ENCODE measurements at regions of chr3 and their contacts with region 1.

Region 1: GRCh38 chr3:53072653-53073552 is 27.0 kb upstream of the SFMBT1 start:
- DNase-seq: peak; percentile 74 to 91 (median 88)
- ATAC-seq: peak; percentile 97
- H3K4me3 ChIP-seq: peak overlapping the region; percentile 82
- H3K4me3 Mint-ChIP-seq: peak overlapping the region; percentile 90 to 97 (median 92)
- H3K27ac ChIP-seq: peak overlapping the region; percentile 79
- H3K27ac Mint-ChIP-seq: peak overlapping the region; percentile 84 to 97 (median 95)
- H3K4me1 ChIP-seq: peaks cover 9 to 15% of the 10 kb centered on the region in 2 donors
- H3K4me1 Mint-ChIP-seq: peaks cover 12 to 24% (median 20%) of the 10 kb centered on the region in 7 donors
- H3K27me3 ChIP-seq: no peaks in the 10 kb centered on the region
- H3K27me3 Mint-ChIP-seq: peaks cover 0 to 6% (median 0%) of the 10 kb centered on the region in 5 donors

Region 2: DNA sequence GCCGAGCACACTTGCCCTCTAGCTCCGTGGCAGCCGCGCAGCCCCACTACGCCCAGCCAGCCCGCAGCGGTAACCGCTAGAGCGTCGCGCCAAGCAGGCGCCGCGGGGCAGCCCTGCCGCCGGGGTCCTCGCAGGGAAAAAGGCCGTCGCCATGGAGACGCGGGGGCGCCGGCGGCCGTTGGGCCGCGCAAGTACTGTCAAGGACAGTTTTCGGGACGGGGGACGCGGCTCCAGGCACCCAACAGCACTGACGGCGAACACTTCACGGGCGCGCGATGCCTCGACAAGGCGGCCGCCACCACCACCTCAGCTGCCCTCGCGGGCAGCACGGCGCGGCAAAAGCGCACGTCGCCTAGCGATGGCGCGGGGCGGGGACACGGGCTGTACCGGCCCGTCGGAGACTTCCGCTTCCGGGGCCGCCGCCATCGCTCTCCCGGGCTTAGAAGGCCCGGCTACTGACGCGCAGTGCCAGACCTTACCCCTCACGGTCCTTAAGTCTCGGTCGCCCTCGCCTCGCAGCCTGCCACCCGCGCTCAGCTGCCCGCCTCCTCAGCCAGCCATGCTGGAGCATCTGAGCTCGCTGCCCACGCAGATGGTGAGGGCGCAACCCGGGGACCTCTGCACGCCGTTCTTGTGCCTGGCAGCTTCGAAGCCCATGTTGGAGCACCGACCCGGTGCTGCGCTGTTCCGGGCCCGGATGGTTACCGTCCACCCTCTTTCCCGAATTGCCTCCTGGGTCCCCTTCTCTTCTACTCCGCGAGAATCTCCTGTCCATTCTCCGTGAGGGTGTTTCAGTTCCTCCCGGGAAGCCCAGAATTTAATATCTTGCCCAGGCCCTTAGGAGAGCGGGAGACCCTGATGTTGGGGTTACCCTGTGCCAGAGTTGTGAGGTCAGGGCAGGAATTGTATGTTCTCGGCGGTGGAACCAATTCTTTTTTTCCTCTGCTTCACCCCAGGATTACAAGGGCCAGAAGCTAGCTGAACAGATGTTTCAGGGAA is 366.9 kb before region 1 on chr3 and contains the starts of genes GLT8D1 and SPCS1:
- CTCF ChIA-PET with region 1: no interaction called
- POLR2A ChIA-PET with region 1: interaction called, 3 read pairs
- intact Hi-C with region 1: loop called in 1 of 2 experiments (anchors 1 kb)
- DNase-seq: peak; percentile 83 to 96 (median 91)
- ATAC-seq: peak; percentile 94
- H3K4me3 ChIP-seq: peak within 1 kb of the TSS; percentile 97
- H3K4me3 Mint-ChIP-seq: peak within 1 kb of the TSS; percentile 89 to 96 (median 94)
- H3K27ac ChIP-seq: peak within 1 kb of the TSS; percentile 93
- H3K27ac Mint-ChIP-seq: peak within 1 kb of the TSS; percentile 90 to 97 (median 95)
- H3K4me1 ChIP-seq: peaks cover 25 to 33% of the 10 kb centered on the region in 2 donors
- H3K4me1 Mint-ChIP-seq: peaks cover 21 to 46% (median 40%) of the 10 kb centered on the region in 7 donors
- H3K27me3 ChIP-seq: no peaks in the 10 kb centered on the region
- H3K27me3 Mint-ChIP-seq: no peaks in the 10 kb centered on the region
- total RNA-seq, gene GLT8D1: 18.9 to 47.7 (median 45.2) TPM
- total RNA-seq, gene SPCS1: 55.0 to 95.3 (median 78.2) TPM

Region 3: DNA sequence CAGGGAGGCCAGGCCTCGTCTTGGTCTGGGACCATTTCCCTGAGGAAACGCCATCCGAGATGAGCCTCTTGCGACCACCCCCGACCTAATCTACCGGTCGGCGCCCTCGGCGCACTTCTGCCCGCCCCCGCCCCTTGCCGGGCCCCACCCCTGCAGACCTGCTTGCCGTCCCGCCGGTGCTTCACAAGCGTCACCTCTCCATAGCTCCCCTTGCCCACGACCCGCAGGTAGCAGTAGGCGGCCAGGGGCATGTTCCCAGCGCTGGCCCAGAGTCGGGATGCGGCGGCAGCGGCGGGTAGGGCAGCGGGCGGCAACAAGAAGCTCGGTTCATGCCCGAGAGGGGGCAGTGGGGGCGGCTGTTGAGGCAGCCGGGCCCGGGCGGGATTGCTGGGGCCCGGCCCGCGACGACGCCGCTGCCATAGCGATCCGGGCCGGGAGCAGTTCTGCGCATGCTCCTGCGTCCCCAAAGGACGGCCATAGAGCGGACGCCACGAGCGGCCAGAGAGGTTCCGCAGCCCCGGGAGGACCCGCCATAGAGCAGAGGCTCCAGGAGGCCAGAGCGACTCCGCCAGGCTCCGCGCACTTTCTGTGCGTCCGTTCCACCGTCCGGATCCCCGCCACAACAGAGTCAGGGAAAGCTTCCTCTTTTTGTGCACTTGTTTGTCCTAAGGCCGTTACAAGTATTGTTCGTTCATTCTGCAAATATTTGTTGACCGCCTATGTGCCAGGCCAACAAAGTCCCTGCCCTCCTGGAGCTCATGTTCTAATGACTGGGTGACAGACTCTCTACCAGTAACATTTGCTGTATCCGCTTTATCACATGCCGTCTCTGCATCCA is 302.2 kb before region 1 on chr3 and contains the start of gene NEK4:
- CTCF ChIA-PET with region 1: no interaction called
- POLR2A ChIA-PET with region 1: no interaction called
- intact Hi-C with region 1: loop called (anchors 1 kb)
- DNase-seq: peak; percentile 44 to 86 (median 65)
- ATAC-seq: peak; percentile 89
- H3K4me3 ChIP-seq: peak within 1 kb of the TSS; percentile 83
- H3K4me3 Mint-ChIP-seq: peak within 1 kb of the TSS; percentile 83 to 99 (median 95)
- H3K27ac ChIP-seq: peak within 1 kb of the TSS; percentile 72
- H3K27ac Mint-ChIP-seq: peak within 1 kb of the TSS; percentile 89 to 97 (median 93)
- H3K4me1 ChIP-seq: peaks cover 5 to 16% of the 10 kb centered on the region in 2 donors
- H3K4me1 Mint-ChIP-seq: peaks cover 12 to 34% (median 23%) of the 10 kb centered on the region in 7 donors
- H3K27me3 ChIP-seq: no peaks in the 10 kb centered on the region
- H3K27me3 Mint-ChIP-seq: peaks cover 0 to 12% (median 0%) of the 10 kb centered on the region in 5 donors
- total RNA-seq, gene NEK4: 14.4 to 28.4 (median 21.1) TPM

Region 4: DNA sequence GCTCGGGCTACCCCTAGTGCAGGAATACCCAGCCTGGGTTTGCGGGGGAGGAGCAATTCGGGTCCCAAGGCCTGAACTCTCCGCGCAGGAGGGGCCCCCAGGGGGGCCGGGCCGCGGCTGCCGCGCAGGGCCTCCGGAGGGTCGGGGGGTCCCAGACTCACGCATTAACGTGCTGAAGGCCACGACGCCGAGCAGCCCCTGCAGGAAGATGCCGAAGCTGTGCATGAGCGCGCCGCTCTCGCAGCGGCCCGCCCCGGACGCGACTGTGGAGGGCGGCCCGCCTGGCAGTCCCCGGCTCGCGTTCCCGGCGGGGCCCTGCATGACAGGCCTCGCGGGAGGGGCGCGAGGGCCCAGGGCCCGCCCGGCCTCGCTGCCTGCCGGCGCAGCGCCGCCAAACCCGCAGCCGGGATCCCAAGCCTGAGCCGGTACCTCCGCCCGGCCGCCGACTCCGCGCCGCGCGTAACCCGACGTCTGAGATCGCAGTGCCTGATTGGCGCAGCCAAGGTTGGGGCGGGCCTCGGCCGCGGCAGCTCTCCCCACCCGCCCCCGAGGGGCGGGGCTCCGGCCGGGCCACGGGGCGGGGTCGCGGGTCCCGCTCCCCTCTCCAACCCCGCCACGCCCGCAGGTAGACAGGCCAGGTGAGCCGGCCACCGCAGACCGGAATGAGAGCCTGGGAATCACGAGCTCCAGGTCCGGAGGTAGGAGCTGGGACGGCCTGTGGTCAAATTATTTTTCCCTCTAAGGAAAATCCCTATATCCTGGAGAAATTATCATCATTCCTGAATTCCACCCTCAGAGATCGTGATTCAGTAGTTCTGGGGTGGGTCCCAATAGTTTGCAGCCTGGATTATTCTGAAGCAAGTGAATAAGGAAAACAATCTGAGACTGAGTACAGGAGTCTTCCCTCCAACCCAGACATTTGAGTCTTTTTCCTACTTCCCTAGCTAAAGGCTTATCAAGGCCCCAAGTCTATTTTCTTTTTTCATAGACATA is 175.5 kb before region 1 on chr3 and contains the start of gene STIMATE:
- CTCF ChIA-PET with region 1: no interaction called
- POLR2A ChIA-PET with region 1: no interaction called
- intact Hi-C with region 1: loop called (anchors 1 to 2 kb)
- DNase-seq: peak; percentile 77 to 89 (median 86)
- ATAC-seq: peak; percentile 97
- H3K4me3 ChIP-seq: peak within 1 kb of the TSS; percentile 85
- H3K4me3 Mint-ChIP-seq: peak within 1 kb of the TSS; percentile 90 to 99 (median 95)
- H3K27ac ChIP-seq: peak within 1 kb of the TSS; percentile 72
- H3K27ac Mint-ChIP-seq: peak within 1 kb of the TSS; percentile 44 to 97 (median 86)
- H3K4me1 ChIP-seq: peaks cover 16 to 23% of the 10 kb centered on the region in 2 donors
- H3K4me1 Mint-ChIP-seq: peaks cover 37 to 51% (median 45%) of the 10 kb centered on the region in 7 donors
- H3K27me3 ChIP-seq: no peaks in the 10 kb centered on the region
- H3K27me3 Mint-ChIP-seq: no peaks in the 10 kb centered on the region
- total RNA-seq, gene STIMATE: 21.1 to 44.9 (median 34.5) TPM

Region 5: DNA sequence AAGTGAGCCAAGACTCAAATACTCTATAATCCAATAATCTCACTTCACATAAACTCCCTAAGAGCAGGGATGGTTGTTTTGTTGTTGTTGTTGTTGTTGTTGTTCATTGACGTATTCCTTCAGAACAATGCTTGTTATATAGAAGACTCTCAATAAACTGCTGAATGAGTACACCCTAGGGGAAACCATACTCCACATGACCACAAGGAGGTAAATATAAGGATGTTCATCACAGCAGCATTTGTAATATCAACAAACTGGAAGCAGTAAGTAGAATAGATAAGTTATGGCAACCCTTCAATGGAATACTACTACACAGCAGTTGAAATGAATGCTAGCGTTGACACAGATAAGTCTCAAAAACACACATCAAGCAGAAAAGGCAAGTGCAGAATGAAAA is 113.1 kb before region 1 on chr3:
- CTCF ChIA-PET with region 1: no interaction called
- POLR2A ChIA-PET with region 1: no interaction called
- intact Hi-C with region 1: loop called in 1 of 2 experiments (anchors 1 kb)
- DNase-seq: peak in 2 of 9 donors; percentile 4 to 21
- ATAC-seq: no peak
- H3K4me3 ChIP-seq: no peak overlapping the region
- H3K4me3 Mint-ChIP-seq: no peak overlapping the region
- H3K27ac ChIP-seq: no peak overlapping the region
- H3K27ac Mint-ChIP-seq: peak overlapping the region in 1 of 9 donors; percentile 16
- H3K4me1 ChIP-seq: no peaks in the 10 kb centered on the region
- H3K4me1 Mint-ChIP-seq: peaks cover 11 to 44% (median 36%) of the 10 kb centered on the region in 7 donors
- H3K27me3 ChIP-seq: no peaks in the 10 kb centered on the region
- H3K27me3 Mint-ChIP-seq: no peaks in the 10 kb centered on the region

Region 6: DNA sequence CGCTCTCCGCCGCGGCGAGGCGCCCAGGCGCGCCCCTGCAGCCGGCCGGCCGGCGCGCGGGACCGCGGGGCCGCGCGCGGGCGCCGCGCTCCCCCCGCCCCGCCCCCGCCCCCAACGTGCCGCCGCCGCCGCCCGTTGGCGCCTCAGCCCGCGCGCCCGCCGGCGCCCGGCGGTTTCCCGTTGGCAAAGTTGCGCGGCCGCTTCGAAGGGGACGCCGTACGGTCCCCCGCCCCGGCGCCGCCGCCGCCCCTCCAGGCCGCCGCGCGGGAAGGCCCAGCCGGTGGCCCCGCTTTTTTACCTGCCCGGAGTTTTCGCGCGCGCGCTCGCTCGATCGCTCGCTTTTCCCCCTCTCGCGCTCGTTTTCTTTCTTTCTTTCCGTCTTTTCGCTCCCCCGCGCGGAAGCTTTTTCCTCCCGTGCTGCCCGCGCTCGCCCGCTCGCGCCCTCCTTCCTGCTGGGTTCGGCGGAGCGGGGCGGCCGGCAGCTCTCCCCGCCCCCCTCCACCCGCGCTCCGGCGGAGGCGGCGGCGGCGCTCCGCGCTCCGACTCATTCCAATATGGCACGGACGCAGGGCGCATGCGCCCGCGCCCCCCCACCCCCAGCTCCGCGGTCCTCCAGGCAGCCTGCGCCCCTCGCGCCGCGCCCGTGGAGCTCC is 27.3 kb before region 1 on chr3 and contains the start of gene SFMBT1:
- CTCF ChIA-PET with region 1: interaction called, 4 read pairs
- POLR2A ChIA-PET with region 1: interaction called, 22 read pairs
- intact Hi-C with region 1: loop called (anchors 1 kb)
- DNase-seq: peak in 8 of 9 donors; percentile 53 to 75 (median 72)
- ATAC-seq: peak; percentile 71
- H3K4me3 ChIP-seq: peak within 1 kb of the TSS; percentile 77
- H3K4me3 Mint-ChIP-seq: peak within 1 kb of the TSS; percentile 92 to 100 (median 97)
- H3K27ac ChIP-seq: peak within 1 kb of the TSS; percentile 86
- H3K27ac Mint-ChIP-seq: peak within 1 kb of the TSS; percentile 91 to 100 (median 99)
- H3K4me1 ChIP-seq: peaks cover 9 to 23% of the 10 kb centered on the region in 2 donors
- H3K4me1 Mint-ChIP-seq: peaks cover 17 to 53% (median 42%) of the 10 kb centered on the region in 7 donors
- H3K27me3 ChIP-seq: no peaks in the 10 kb centered on the region
- H3K27me3 Mint-ChIP-seq: peaks cover 0 to 17% (median 0%) of the 10 kb centered on the region in 5 donors
- total RNA-seq, gene SFMBT1: 28.4 to 47.1 (median 39.0) TPM

Measured in naive thymus-derived CD4-positive, alpha-beta T cell (primary cell).